Endothelial cell of umbilical vein (primary cell): ENCODE measurements at regions of chr12 and their contacts with region 1.

Region 1: DNA sequence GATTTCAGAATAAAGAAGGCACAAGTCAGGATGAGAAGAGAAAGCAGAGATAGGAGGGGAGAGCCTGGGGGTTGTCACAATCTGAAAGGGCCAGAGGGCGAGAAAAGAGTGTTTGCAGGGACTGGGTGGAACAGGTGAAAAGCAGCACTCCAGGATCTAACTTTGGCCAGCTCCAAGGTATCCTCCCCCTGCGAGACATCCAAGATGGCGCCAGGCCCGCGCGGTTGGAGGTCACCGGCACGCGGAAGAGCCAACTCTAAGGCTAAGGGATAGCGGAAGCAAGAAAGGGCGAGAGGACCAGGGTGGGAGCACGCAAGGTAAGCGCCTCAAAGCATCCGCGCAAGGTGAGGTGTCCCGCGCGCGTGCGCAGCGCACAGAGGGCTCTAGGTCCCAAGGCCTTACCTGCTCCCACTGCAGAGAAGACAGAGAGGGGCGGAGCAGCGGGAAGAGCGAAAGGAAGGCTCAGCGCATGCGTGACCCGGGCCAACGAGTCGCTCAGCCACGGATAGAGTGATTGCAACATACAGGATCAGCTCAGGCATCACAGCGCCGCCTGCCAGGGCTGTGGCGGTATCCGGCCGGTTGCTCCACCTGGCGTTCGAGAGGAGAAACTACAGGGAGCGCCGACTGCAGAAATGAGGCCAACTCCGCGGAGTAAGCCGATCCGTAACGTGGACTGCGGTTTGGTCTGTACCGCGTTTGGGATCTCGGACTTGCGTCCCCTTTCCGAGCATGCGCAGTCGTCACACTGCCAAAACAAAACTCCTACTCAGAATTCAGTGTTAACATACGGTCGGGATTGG is at the start of gene ATP5MC2:
- DNase-seq: peak; percentile 100
- H3K4me3 ChIP-seq: peak within 1 kb of the TSS; percentile 55 to 86 (median 60)
- H3K27ac ChIP-seq: peak within 1 kb of the TSS; percentile 56
- H3K4me1 ChIP-seq: peaks cover 26% of the 10 kb centered on the region
- H3K27me3 ChIP-seq: no peaks in the 10 kb centered on the region
- CTCF ChIP-seq: peak; percentile 99 to 100
- POLR2A ChIP-seq: peak; percentile 94
- total RNA-seq, gene ATP5MC2: 375 and 402 TPM in 2 replicates

Region 2: DNA sequence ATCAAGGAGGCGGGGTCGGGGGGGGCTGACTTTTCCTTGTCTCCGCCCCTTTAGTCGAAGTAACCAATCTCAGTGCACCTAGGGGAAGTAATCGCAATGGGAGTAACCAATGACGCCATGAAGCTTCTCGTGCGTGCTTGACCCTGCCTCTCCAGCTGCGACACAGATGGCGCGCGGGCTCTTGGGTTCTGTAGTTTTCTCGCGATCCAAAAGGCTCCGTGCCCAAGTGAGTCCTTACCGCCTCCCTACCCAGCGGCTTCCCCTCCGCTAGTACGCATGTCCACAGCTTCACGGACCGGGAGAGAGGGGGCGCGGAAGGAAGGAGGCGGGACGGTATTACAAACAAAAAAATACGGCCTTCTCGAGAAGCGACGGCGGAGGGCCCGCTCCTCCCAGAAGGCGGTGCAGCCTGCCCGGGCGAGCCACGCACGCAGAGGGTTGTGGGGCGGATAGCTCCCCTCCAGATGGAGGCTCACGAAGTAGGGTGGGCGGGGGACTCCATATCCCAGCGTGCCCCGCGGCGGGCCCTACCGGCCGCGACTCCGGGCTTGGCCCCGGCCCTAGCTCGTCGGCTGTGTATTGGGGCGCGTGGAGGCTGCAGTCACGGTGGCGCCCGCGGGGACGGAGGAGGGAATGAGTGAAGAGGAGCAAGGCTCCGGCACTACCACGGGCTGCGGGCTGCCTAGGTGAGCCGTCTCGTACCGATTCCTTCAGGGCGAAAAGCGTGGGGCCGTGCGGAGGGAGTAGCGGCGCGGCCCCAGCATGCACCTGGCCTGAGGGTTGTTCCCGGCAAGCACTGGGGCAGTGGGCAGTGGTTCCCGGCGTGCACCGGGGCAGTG is 174.9 kb before region 1 on chr12 and contains the start of gene TARBP2:
- CTCF ChIA-PET with region 1: no interaction called
- POLR2A ChIA-PET with region 1: no interaction called
- dilution Hi-C with region 1: no loop called
- intact Hi-C with region 1: loop called (anchors 1 kb)
- DNase-seq: peak; percentile 100
- H3K4me3 ChIP-seq: peak within 1 kb of the TSS; percentile 2 to 54 (median 49)
- H3K27ac ChIP-seq: peak within 1 kb of the TSS; percentile 52
- H3K4me1 ChIP-seq: peaks cover 32% of the 10 kb centered on the region
- H3K27me3 ChIP-seq: no peaks in the 10 kb centered on the region
- CTCF ChIP-seq: no peak
- POLR2A ChIP-seq: peak; percentile 82
- total RNA-seq, gene TARBP2: 53.8 and 57.2 TPM in 2 replicates

Region 3: DNA sequence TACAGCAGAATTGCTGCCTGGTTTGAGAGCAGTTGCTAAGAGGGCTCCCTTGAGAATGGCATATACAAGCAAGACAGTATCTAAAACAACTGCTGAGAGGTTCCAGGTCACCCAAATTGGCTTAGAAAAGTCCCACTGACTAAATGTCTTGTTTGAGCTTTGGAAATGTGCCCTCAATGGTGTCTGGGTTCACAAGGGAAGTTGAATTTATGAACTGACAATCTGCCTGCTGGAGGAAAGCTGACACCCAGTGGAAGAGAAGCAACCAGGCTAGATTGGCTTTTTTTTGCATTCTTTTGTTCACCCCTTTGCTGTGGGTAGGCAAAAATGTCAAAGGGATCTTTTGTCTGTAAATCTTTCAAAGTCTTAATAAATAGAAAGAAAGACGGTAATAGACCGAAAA is 124.0 kb before region 1 on chr12:
- CTCF ChIA-PET with region 1: interaction called, 12 read pairs
- POLR2A ChIA-PET with region 1: no interaction called
- dilution Hi-C with region 1: no loop called
- intact Hi-C with region 1: no loop called
- DNase-seq: no peak
- H3K4me3 ChIP-seq: no peak overlapping the region
- H3K27ac ChIP-seq: no peak overlapping the region
- H3K4me1 ChIP-seq: no peaks in the 10 kb centered on the region
- H3K27me3 ChIP-seq: no peaks in the 10 kb centered on the region
- CTCF ChIP-seq: no peak
- POLR2A ChIP-seq: no peak

Region 4: DNA sequence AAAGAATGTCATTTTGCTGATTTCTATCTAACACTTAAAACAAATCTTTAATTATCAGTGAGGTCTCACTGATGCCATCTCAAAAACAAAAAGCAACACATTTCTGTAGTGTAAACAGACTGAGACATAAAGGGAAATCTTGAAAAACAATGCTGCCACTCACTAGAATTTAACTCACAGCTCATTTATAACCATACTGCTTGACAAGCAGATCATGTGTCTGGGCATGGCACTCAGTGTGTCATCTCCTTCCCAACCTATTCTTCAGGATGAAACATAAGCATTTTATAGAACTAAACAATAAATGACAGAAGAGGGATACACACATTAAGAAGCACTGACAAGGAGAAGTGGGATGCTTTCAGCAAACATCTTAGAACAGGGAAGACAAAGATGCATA is 72.0 kb before region 1 on chr12:
- CTCF ChIA-PET with region 1: interaction called, 13 read pairs
- POLR2A ChIA-PET with region 1: no interaction called
- dilution Hi-C with region 1: no loop called
- intact Hi-C with region 1: loop called (anchors 1 kb)
- DNase-seq: peak; percentile 35
- H3K4me3 ChIP-seq: no peak overlapping the region
- H3K27ac ChIP-seq: no peak overlapping the region
- H3K4me1 ChIP-seq: peaks cover 21% of the 10 kb centered on the region
- H3K27me3 ChIP-seq: no peaks in the 10 kb centered on the region
- CTCF ChIP-seq: no peak
- POLR2A ChIP-seq: no peak

Region 5: DNA sequence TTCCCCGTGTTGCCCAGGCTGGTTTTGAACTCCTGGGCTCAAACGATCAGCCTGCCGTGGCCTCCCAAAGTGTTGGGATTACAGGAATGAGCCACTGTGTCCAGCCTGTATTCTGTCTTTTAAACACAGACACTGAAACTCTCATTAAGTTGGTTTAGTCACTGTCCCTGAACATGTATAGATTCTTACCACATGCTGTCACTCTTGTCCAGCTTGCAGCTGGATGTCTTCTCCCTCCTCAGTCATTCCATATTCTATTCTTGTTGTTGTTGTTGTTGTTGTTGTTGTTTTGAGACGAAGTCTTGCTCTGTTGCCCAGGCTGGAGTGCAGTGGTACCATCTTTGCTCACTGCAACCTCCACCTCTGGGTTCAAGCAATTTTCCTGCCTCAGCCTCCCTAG is 12.3 kb after region 1 on chr12:
- CTCF ChIA-PET with region 1: interaction called, 10 read pairs
- POLR2A ChIA-PET with region 1: no interaction called
- dilution Hi-C with region 1: no loop called
- intact Hi-C with region 1: no loop called
- DNase-seq: no peak
- H3K4me3 ChIP-seq: no peak overlapping the region
- H3K27ac ChIP-seq: no peak overlapping the region
- H3K4me1 ChIP-seq: no peaks in the 10 kb centered on the region
- H3K27me3 ChIP-seq: peaks cover 7 to 12% of the 10 kb centered on the region in 2 experiments
- CTCF ChIP-seq: no peak
- POLR2A ChIP-seq: no peak